CD4-positive, alpha-beta memory T cell (primary cell): ENCODE measurements at regions of chr4 and their contacts with region 1.

Region 1: GRCh38 chr4:153573881-153574802 is 108.0 kb downstream of the TMEM131L start:
- DNase-seq: peak; percentile 59 to 74 (median 64)
- H3K4me3 ChIP-seq: no peak overlapping the region
- H3K4me3 Mint-ChIP-seq: peak overlapping the region in 3 of 8 donors; percentile 40 to 64 (median 47)
- H3K27ac ChIP-seq: peak overlapping the region; percentile 1
- H3K27ac Mint-ChIP-seq: peak overlapping the region in 6 of 7 donors; percentile 16 to 86 (median 68)
- H3K4me1 ChIP-seq: peaks cover 31% of the 10 kb centered on the region
- H3K4me1 Mint-ChIP-seq: peaks cover 50 to 74% (median 59%) of the 10 kb centered on the region in 4 donors
- H3K27me3 ChIP-seq: no peaks in the 10 kb centered on the region
- H3K27me3 Mint-ChIP-seq: no peaks in the 10 kb centered on the region

Region 2: GRCh38 chr4:153142700-153143438 is 431.3 kb before region 1 on chr4:
- CTCF ChIA-PET with region 1: interaction called, 12 read pairs
- POLR2A ChIA-PET with region 1: no interaction called
- intact Hi-C with region 1: loop called (anchors 1 kb)
- DNase-seq: peak; percentile 63 to 68 (median 64)
- H3K4me3 ChIP-seq: no peak overlapping the region
- H3K4me3 Mint-ChIP-seq: no peak overlapping the region
- H3K27ac ChIP-seq: no peak overlapping the region
- H3K27ac Mint-ChIP-seq: no peak overlapping the region
- H3K4me1 ChIP-seq: peaks cover 4% of the 10 kb centered on the region
- H3K4me1 Mint-ChIP-seq: peaks cover 0 to 12% (median 5%) of the 10 kb centered on the region in 4 donors
- H3K27me3 ChIP-seq: no peaks in the 10 kb centered on the region
- H3K27me3 Mint-ChIP-seq: no peaks in the 10 kb centered on the region

Region 3: DNA sequence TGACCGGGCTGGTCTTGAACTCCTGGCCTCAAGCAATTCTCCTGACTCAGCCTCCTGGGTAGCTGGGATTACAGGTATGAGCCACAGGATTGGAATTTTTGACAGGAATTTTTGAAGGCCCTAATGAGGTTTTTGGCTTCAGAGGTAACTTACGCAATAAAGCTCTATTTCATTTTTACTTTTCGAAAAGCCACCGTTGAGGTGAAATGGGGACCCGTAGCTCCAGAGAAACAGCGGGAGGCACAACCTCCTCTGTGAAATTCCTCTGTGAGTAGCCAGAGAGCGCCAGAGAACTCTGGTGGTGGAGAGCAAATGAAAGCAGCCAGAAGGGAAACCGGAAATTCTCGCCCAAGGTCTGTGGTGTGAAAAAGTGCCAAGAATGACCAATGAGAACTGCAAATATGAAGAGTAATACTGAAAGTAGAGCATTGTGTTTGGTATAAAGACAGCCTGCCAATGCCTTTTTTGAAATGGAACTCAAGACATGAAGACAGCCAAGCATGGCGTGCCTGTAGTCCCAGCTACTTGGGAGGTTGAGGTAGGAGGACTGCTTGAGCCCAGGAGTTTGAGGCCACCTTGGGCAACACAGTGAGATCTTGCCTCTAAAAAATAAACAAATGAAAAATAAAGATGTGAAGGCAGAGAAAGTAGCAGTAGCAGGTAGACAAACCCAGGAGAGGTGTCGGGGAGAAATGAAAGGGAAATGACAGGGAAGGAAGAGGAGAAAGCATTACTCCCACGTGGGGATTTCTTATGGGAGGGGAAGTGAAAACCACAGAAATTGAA is 141.0 kb before region 1 on chr4:
- CTCF ChIA-PET with region 1: interaction called, 228 read pairs
- POLR2A ChIA-PET with region 1: interaction called, 32 read pairs
- intact Hi-C with region 1: loop called (anchors 1 kb)
- DNase-seq: peak; percentile 72 to 79 (median 77)
- H3K4me3 ChIP-seq: peak overlapping the region; percentile 59
- H3K4me3 Mint-ChIP-seq: peak overlapping the region; percentile 84 to 95 (median 88)
- H3K27ac ChIP-seq: peak overlapping the region; percentile 55
- H3K27ac Mint-ChIP-seq: peak overlapping the region; percentile 87 to 97 (median 94)
- H3K4me1 ChIP-seq: peaks cover 56% of the 10 kb centered on the region
- H3K4me1 Mint-ChIP-seq: peaks cover 36 to 68% (median 50%) of the 10 kb centered on the region in 4 donors
- H3K27me3 ChIP-seq: no peaks in the 10 kb centered on the region
- H3K27me3 Mint-ChIP-seq: no peaks in the 10 kb centered on the region

Region 4: DNA sequence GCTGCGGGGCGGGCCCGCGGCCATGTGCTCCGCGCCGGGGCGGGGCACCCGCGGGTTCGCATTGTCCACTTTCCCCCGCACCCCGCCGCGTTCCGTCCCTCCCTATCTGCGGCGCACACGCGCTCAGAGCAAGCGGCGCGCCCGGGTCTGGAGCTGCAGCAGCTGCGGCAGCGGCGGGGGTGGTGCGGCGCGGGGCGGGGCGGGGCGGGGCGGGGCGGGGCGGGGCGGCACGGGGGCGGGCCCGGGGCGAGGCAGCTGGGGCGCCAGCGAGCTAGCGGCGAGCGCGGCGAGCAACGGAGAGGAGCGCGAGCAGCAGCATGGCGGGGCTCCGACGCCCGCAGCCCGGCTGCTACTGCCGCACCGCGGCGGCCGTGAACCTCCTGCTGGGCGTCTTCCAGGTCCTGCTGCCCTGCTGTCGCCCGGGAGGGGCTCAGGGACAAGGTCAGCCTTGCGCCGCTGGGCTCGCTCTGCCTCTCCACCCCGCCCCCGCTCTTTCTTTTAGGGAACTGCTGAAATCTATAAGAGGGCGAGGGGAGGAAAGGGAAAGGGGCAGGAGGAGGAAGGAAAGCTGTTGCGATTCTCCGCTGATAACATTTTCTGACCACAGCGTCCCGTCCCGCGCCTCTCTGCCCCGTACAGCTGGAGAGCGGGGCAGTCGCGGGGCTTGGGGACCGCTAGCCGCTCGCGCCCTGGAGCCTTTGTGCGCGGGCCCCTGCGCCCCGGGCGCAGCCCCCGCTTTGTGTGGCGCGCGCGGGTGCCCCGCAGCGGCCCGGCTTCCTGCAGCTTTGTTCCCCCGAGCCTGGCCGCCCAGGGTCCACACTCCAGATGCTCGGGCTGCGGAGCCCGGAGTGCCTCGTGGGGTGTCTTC is 107.8 kb before region 1 on chr4 and contains the start of gene TMEM131L:
- CTCF ChIA-PET with region 1: interaction called, 27 read pairs
- POLR2A ChIA-PET with region 1: interaction called, 66 read pairs
- intact Hi-C with region 1: loop called (anchors 1 kb)
- DNase-seq: peak; percentile 66 to 81 (median 73)
- H3K4me3 ChIP-seq: peak within 1 kb of the TSS; percentile 79 to 86
- H3K4me3 Mint-ChIP-seq: peak within 1 kb of the TSS; percentile 89 to 99 (median 98)
- H3K27ac ChIP-seq: peak within 1 kb of the TSS; percentile 76
- H3K27ac Mint-ChIP-seq: peak within 1 kb of the TSS; percentile 95 to 100 (median 98)
- H3K4me1 ChIP-seq: peaks cover 37% of the 10 kb centered on the region
- H3K4me1 Mint-ChIP-seq: peaks cover 30 to 60% (median 36%) of the 10 kb centered on the region in 4 donors
- H3K27me3 ChIP-seq: no peaks in the 10 kb centered on the region
- H3K27me3 Mint-ChIP-seq: no peaks in the 10 kb centered on the region
- total RNA-seq, gene TMEM131L: 62.5 to 65.6 TPM

Region 5: GRCh38 chr4:153521999-153522801 is 51.9 kb before region 1 on chr4:
- CTCF ChIA-PET with region 1: interaction called, 10 read pairs
- POLR2A ChIA-PET with region 1: interaction called, 5 read pairs
- intact Hi-C with region 1: loop called (anchors 1 kb)
- DNase-seq: peak; percentile 74 to 78 (median 75)
- H3K4me3 ChIP-seq: peak overlapping the region in 1 of 2 donors; percentile 41
- H3K4me3 Mint-ChIP-seq: peak overlapping the region; percentile 73 to 87 (median 84)
- H3K27ac ChIP-seq: peak overlapping the region; percentile 67
- H3K27ac Mint-ChIP-seq: peak overlapping the region; percentile 69 to 96 (median 92)
- H3K4me1 ChIP-seq: peaks cover 98% of the 10 kb centered on the region
- H3K4me1 Mint-ChIP-seq: peaks cover 78 to 97% (median 89%) of the 10 kb centered on the region in 4 donors
- H3K27me3 ChIP-seq: no peaks in the 10 kb centered on the region
- H3K27me3 Mint-ChIP-seq: no peaks in the 10 kb centered on the region

Region 6: DNA sequence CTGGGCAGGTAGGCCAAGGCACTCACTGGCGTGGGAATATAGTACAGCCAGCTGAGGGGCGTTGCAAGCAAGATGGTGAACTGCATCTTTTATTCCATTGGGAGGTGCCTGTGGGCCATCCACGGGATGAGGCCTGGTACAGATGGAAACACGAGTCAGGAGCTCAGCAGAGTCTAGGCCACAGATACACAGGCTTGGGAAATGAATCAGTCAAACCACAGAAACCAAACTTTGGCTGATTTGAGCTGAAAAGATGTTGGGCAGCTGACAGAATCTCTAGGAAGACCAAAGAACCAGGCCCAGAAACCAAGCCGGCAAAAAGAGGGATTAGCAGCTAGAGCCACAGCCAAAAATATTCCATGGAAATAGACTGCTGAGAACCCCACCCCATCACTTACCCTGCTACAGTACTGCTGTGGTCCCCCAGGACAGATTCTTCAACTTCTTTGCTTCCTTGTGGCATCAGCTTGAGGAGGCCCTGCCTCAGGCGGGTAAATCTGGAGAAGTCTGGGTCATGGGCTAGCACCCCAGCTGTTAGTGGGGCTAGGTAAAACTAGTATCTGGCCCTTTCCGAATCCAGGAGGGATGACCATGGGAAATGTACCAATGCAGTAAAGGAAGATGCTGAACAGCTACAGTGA is 32.6 kb before region 1 on chr4:
- CTCF ChIA-PET with region 1: interaction called, 19 read pairs
- POLR2A ChIA-PET with region 1: interaction called, 3 read pairs
- intact Hi-C with region 1: loop called (anchors 5 kb)
- DNase-seq: no peak
- H3K4me3 ChIP-seq: no peak overlapping the region
- H3K4me3 Mint-ChIP-seq: peak overlapping the region in 7 of 8 donors; percentile 17 to 77 (median 41)
- H3K27ac ChIP-seq: no peak overlapping the region
- H3K27ac Mint-ChIP-seq: peak overlapping the region; percentile 33 to 87 (median 75)
- H3K4me1 ChIP-seq: peaks cover 78% of the 10 kb centered on the region
- H3K4me1 Mint-ChIP-seq: peaks cover 51 to 87% (median 74%) of the 10 kb centered on the region in 4 donors
- H3K27me3 ChIP-seq: no peaks in the 10 kb centered on the region
- H3K27me3 Mint-ChIP-seq: no peaks in the 10 kb centered on the region

Region 7: DNA sequence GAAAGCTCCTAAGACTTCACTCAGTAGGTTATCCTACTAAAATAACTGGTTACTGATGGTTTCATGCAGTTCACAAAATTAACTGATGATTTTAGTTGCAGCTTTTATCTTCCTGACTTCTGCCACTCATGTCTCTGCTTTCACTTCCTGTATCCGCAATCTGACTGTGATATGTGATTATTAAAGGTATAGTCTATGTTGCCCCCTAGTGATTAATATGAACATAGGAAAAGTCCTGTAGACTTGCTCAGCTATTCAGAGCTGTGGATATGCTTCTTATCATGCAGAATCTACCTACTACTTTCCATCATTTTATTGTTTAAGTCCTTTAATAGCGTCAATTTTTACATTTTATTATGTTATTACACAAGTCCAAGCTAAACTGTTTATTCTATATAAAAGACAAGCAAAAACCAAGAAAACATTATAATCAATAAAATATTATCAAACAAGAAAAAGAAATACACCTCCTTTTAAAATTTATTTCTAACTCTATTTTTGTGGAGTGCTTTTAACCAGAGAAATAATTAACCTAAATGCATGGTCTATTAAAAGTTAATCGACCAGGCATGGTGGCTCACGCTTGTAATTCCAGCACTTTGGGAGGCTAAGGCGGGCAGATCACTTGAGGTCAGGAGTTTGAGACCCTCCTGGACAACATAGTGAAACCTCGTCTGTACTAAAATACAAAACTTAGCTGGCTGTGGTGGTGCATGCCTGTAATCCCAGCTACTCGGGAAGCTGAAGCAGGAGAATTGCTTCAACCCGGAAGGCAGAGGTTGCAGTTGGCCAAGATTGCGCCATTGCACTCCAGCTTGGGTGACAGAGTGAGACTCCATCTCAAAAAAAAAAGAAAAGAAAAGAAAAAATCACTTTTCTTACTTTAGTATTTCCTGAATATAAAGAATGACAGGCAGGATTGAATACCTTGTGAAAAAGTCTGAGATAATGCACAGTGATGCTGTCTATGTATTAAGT is 69.6 kb after region 1 on chr4:
- CTCF ChIA-PET with region 1: interaction called, 11 read pairs
- POLR2A ChIA-PET with region 1: interaction called, 4 read pairs
- intact Hi-C with region 1: loop called (anchors 2 kb)
- DNase-seq: peak in 4 of 5 donors; percentile 54 to 65 (median 62)
- H3K4me3 ChIP-seq: no peak overlapping the region
- H3K4me3 Mint-ChIP-seq: peak overlapping the region in 3 of 8 donors; percentile 8 to 62 (median 35)
- H3K27ac ChIP-seq: no peak overlapping the region
- H3K27ac Mint-ChIP-seq: peak overlapping the region in 3 of 7 donors; percentile 19 to 93 (median 46)
- H3K4me1 ChIP-seq: peaks cover 6% of the 10 kb centered on the region
- H3K4me1 Mint-ChIP-seq: peaks cover 7 to 15% (median 10%) of the 10 kb centered on the region in 4 donors
- H3K27me3 ChIP-seq: no peaks in the 10 kb centered on the region
- H3K27me3 Mint-ChIP-seq: no peaks in the 10 kb centered on the region

Region 8: DNA sequence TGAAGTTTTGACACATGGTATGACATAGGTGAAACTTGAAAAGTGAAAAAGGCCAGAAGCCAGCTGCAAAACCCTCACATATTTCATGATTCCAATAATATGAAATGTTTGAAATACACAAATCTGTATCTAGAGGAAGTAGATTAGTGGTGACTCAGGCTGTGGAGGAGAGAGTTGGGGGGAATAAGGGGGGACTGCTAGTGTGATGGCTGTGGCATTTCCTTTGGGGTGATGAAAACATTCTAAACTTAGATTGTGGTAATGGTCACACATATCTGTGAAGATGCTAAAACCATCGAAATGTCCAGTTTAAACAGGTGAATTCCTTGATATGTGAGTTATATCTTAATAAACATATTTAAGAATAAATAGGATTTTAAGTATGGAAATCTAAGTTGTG is 558.3 kb after region 1 on chr4:
- CTCF ChIA-PET with region 1: no interaction called
- POLR2A ChIA-PET with region 1: no interaction called
- intact Hi-C with region 1: no loop called
- DNase-seq: no peak
- H3K4me3 ChIP-seq: no peak overlapping the region
- H3K4me3 Mint-ChIP-seq: no peak overlapping the region
- H3K27ac ChIP-seq: no peak overlapping the region
- H3K27ac Mint-ChIP-seq: no peak overlapping the region
- H3K4me1 ChIP-seq: no peaks in the 10 kb centered on the region
- H3K4me1 Mint-ChIP-seq: no peaks in the 10 kb centered on the region
- H3K27me3 ChIP-seq: no peaks in the 10 kb centered on the region
- H3K27me3 Mint-ChIP-seq: peaks cover 6 to 9% of the 10 kb centered on the region in 2 donors